Activated CD8-positive, alpha-beta memory T cell treated with anti-CD3 and anti-CD28 coated beads, Interleukin-2, amount 10 ng/mL, durations not matched to agents 7 days and 5 days (primary cell): ENCODE measurements at regions of chr12 and their contacts with region 1.

Region 1: DNA sequence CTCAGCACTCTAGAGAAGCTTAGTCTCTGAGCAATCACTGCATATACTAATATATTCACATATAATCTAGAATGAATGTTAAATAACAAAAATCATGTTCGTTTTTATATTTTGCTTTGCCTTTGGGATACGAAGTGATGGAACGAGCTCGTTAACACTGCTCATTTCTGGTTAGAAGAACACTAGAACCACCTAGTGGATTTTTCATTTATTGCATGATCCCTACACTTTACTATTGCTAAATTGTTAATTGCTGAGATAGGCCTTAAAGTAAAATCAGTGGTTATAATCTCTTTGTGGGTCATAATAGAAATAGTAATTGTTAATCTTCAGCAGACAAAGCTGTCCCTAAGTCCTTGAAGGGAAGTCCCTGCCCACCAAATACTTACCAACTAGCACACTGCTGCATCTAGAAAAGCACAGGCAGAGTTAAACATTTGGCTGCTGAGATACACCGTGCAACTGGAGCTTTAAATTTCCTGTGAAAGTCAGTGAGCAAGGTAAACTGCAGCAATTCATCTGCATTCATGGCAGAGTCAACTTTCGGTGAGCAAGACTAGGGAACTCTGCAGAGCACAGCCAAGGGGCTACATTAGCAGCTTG is 353.7 kb downstream of the APAF1 start:
- DNase-seq: no peak
- ATAC-seq: peak; percentile 66
- H3K4me3 Mint-ChIP-seq: no peak overlapping the region
- H3K27ac Mint-ChIP-seq: no peak overlapping the region
- H3K4me1 Mint-ChIP-seq: no peaks in the 10 kb centered on the region
- H3K27me3 Mint-ChIP-seq: peaks cover 6% of the 10 kb centered on the region

Region 2: GRCh38 chr12:98771811-98772752 is 226.7 kb before region 1 on chr12:
- CTCF ChIA-PET with region 1: no interaction called
- DNase-seq: no peak
- ATAC-seq: no peak
- H3K4me3 Mint-ChIP-seq: no peak overlapping the region
- H3K27ac Mint-ChIP-seq: no peak overlapping the region
- H3K4me1 Mint-ChIP-seq: peaks cover 2% of the 10 kb centered on the region
- H3K27me3 Mint-ChIP-seq: peaks cover 4% of the 10 kb centered on the region

Region 3: DNA sequence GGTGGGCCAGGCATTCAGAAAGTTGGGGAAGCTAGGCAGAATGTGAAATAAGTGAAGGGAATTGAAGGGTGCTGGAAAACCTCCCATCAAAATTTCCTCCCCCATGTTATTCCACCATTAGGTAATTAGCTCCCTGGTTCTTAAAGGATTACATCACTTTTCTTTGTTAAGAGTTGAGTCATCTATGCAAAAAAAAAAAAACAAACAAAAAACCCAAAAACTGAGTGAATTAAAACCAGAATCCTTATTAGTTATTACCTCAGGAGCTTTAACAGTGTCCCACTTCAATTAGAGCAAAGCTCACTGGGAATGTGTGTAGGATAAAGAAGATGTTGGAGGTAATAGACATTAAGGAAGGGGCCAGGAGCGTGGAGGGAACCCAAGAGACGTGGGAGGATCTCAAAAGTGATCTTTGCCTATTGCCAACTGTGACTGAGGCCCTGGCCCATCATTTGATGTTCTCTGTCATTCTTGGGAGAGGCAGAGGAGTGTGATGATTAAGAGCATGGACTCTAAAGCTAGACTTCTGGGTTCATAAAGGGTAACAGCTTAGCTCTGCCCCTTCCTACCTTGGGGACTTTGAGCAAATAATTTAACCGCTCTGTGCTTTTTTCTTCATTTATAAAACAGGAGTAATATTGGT is 11.0 kb after region 1 on chr12:
- CTCF ChIA-PET with region 1: interaction called, 10 read pairs
- DNase-seq: no peak
- ATAC-seq: no peak
- H3K4me3 Mint-ChIP-seq: no peak overlapping the region
- H3K27ac Mint-ChIP-seq: no peak overlapping the region
- H3K4me1 Mint-ChIP-seq: no peaks in the 10 kb centered on the region
- H3K27me3 Mint-ChIP-seq: peaks cover 18% of the 10 kb centered on the region

Region 4: GRCh38 chr12:99087278-99087677 is 88.5 kb after region 1 on chr12:
- CTCF ChIA-PET with region 1: no interaction called
- DNase-seq: no peak
- ATAC-seq: no peak
- H3K4me3 Mint-ChIP-seq: no peak overlapping the region
- H3K27ac Mint-ChIP-seq: no peak overlapping the region
- H3K4me1 Mint-ChIP-seq: no peaks in the 10 kb centered on the region
- H3K27me3 Mint-ChIP-seq: no peaks in the 10 kb centered on the region